Activated T-helper 2 cell treated with anti-CD3 and anti-CD28 coated beads, Interferon-gamma antibody, Interleukin-2, Interleukin-4, amounts not matched to agents 10 μg/mL and 5 μg/mL and 100 μg/mL, durations not matched to agents 14 hours and 24 hours and 36 hours (primary cell): ENCODE measurements at regions of chr22 and their contacts with region 1.

Region 1: GRCh38 chr22:45553351-45554039 is 50.8 kb downstream of the FBLN1 start:
- DNase-seq: peak; percentile 24
- H3K4me3 Mint-ChIP-seq: no peak overlapping the region
- H3K27ac Mint-ChIP-seq: no peak overlapping the region
- H3K4me1 Mint-ChIP-seq: peaks cover 2% of the 10 kb centered on the region
- H3K27me3 Mint-ChIP-seq: no peaks in the 10 kb centered on the region

Region 2: GRCh38 chr22:45226527-45227186 is 326.8 kb before region 1 on chr22:
- intact Hi-C with region 1: no loop called
- DNase-seq: no peak
- H3K4me3 Mint-ChIP-seq: no peak overlapping the region
- H3K27ac Mint-ChIP-seq: no peak overlapping the region
- H3K4me1 Mint-ChIP-seq: peaks cover 14% of the 10 kb centered on the region
- H3K27me3 Mint-ChIP-seq: no peaks in the 10 kb centered on the region

Region 3: DNA sequence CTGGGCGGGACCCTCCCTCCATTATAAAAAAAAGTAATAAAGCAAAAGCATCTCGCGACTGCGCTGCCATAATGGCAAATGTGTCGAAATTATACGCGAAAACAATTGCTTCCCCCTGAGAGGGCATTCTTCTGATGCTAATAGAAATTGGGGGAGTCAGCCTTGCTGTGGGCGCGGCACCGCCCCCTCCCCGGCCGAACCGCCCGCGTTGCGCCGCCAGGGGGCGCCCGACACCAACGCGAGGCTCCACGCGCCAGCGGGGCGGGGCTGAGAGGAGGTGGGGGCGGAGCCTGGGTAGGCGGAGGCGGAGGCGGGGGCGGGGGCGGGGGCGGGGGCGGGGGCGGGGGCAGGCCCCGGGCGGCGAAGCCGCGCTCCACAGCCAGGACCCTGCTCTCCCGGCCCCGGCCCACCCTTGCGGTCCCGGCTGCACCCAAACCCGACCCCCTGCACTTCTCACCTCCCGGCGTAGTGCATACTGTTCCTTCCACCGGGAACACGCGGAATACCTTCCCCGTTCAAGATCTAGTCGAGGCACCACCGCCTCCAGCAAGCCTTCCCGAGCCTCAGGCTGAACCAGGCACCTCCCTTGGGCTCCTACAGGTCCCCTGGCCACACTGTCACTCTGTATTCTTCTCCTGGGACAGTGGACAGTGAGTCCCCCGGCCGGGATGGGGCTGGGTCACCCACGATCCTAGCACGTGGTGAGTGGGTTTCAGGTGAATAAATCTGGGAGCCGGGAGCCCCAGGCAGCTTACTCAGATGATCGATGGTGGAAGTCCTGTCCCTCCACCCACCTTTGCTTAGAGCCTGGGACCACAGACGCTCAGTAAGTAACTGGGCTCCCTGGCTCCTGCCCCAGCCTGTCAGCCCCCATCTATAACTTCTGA is 284.3 kb before region 1 on chr22:
- intact Hi-C with region 1: loop called (anchors 10 kb)
- DNase-seq: peak; percentile 80
- H3K4me3 Mint-ChIP-seq: peak overlapping the region; percentile 77
- H3K27ac Mint-ChIP-seq: peak overlapping the region; percentile 64
- H3K4me1 Mint-ChIP-seq: peaks cover 5% of the 10 kb centered on the region
- H3K27me3 Mint-ChIP-seq: peaks cover 24% of the 10 kb centered on the region

Region 4: GRCh38 chr22:45441138-45441537 is 112.4 kb before region 1 on chr22:
- intact Hi-C with region 1: loop called (anchors 10 kb)
- DNase-seq: peak; percentile 24
- H3K4me3 Mint-ChIP-seq: no peak overlapping the region
- H3K27ac Mint-ChIP-seq: no peak overlapping the region
- H3K4me1 Mint-ChIP-seq: peaks cover 8% of the 10 kb centered on the region
- H3K27me3 Mint-ChIP-seq: peaks cover 2% of the 10 kb centered on the region

Region 5: DNA sequence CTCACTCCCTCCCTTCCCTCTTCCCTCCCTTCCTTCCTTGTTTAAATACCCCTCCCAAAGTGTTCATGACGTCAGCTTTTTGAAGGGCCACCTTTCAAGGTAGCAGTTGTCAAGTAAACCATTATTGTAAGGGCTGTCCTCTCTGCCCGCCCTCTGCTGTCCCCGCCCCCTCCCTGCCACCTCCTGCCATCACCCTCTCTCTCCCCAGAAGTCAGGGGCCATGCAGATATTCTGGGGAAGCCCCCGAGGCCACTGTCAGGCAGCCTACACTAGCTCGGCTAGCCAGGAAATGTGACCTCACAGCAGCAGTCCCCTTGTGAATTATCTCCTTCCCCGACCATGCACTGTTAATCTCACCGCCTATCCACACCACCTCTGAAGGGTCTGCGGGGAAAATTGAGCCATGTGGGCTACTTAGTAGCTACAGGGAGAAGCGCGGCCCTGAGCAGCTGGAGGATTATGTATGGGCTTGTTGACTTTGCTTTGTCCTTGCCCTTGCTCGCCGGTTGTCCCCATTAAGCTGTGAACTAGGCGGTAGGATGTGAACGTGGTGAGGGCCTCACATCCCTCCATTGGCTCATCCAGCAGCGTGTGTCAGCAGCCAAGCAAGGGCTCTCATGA is 76.1 kb after region 1 on chr22:
- intact Hi-C with region 1: no loop called
- DNase-seq: no peak
- H3K4me3 Mint-ChIP-seq: no peak overlapping the region
- H3K27ac Mint-ChIP-seq: no peak overlapping the region
- H3K4me1 Mint-ChIP-seq: peaks cover 1% of the 10 kb centered on the region
- H3K27me3 Mint-ChIP-seq: peaks cover 48% of the 10 kb centered on the region

Region 6: GRCh38 chr22:45804986-45805325 is 251.5 kb after region 1 on chr22:
- intact Hi-C with region 1: no loop called
- DNase-seq: no peak
- H3K4me3 Mint-ChIP-seq: no peak overlapping the region
- H3K27ac Mint-ChIP-seq: no peak overlapping the region
- H3K4me1 Mint-ChIP-seq: peaks cover 4% of the 10 kb centered on the region
- H3K27me3 Mint-ChIP-seq: no peaks in the 10 kb centered on the region